Psoas muscle (tissue), 8 donors: ENCODE measurements at regions of chr5 and their contacts with region 1.

Region 1: GRCh38 chr5:156824800-156825199 is 25.3 kb upstream of the PPP1R2B start:
- DNase-seq: no peak
- ATAC-seq: peak in 3 of 4 donors; percentile 51 to 85 (median 69)
- H3K4me3 ChIP-seq: no peak overlapping the region
- H3K27ac ChIP-seq: no peak overlapping the region
- H3K4me1 ChIP-seq: no peaks in the 10 kb centered on the region
- H3K27me3 ChIP-seq: no peaks in the 10 kb centered on the region
- CTCF ChIP-seq: peak; percentile 47

Region 2: DNA sequence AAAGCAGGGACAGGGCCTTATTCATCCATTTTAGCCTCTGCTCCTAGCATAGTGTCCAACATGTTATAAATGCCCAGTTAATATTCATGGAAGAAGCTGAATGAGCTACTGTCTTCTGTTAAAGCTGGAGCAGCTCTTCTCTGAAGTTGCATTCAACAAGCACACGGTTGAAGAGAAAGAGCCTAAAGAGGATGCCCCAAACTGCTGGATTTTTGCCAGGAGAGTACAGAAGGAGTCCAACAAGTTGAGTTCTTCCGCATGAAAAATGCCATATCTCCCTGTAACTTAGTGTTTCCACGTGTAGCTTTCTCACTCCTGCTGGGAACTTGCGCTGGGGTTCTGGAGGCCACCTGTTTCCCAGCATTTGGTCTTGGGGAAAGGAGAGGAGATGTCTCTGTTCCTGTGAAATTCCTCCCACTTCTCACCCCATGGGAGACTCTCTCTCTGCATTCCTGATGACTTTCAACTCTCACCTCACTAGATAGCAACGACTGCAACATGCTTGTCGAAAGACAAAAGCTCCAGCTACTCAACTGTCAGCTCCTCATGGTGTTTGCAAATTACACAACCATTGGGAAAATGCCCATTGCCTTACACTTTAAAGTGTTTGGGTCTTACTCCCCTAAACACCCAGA is 1688.5 kb before region 1 on chr5:
- intact Hi-C with region 1: loop called in 1 of 2 experiments (anchors 10 kb)
- DNase-seq: no peak
- ATAC-seq: no peak
- H3K4me3 ChIP-seq: no peak overlapping the region
- H3K27ac ChIP-seq: no peak overlapping the region
- H3K4me1 ChIP-seq: no peaks in the 10 kb centered on the region
- H3K27me3 ChIP-seq: peaks cover 0 to 7% (median 3%) of the 10 kb centered on the region in 3 donors
- CTCF ChIP-seq: no peak

Region 3: DNA sequence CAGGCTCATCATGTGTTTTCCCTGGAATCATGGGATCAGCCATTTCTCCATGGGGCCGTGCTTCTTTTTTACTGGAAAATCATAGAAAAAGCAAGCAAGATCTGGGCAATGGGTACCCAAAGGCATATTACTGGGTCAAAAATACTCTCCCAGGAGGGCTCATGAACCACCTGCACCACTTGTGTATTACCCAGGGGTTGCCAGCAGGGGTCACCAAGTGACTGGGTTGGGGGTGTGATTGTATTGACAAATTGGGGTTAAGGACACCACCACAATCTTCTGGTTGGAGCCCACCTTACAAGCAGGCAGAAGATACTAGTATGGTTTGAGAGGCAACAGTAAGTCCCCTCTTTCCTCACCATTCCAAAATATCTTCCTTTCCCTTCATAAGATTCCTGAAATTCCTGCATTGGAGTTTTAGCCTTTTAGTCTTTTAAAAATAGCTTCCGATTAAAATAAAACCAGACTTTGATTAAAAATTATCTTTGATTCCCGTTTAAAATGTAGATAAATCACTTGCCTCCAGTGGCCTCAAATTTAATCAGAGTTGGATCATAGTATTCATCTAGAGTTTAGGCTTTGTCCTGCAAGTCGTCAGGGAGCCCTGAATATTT is 1207.9 kb before region 1 on chr5:
- intact Hi-C with region 1: loop called in 1 of 2 experiments (anchors 10 kb)
- DNase-seq: peak; percentile 19 to 54
- ATAC-seq: peak in 2 of 4 donors; percentile 61 to 84
- H3K4me3 ChIP-seq: no peak overlapping the region
- H3K27ac ChIP-seq: no peak overlapping the region
- H3K4me1 ChIP-seq: no peaks in the 10 kb centered on the region
- H3K27me3 ChIP-seq: no peaks in the 10 kb centered on the region
- CTCF ChIP-seq: peak; percentile 76

Region 4: GRCh38 chr5:155700333-155700732 is 1124.5 kb before region 1 on chr5:
- intact Hi-C with region 1: loop called in 1 of 2 experiments (anchors 10 kb)
- DNase-seq: no peak
- ATAC-seq: peak in 2 of 4 donors; percentile 36 to 63
- H3K4me3 ChIP-seq: no peak overlapping the region
- H3K27ac ChIP-seq: no peak overlapping the region
- H3K4me1 ChIP-seq: no peaks in the 10 kb centered on the region
- H3K27me3 ChIP-seq: no peaks in the 10 kb centered on the region
- CTCF ChIP-seq: no peak

Region 5: DNA sequence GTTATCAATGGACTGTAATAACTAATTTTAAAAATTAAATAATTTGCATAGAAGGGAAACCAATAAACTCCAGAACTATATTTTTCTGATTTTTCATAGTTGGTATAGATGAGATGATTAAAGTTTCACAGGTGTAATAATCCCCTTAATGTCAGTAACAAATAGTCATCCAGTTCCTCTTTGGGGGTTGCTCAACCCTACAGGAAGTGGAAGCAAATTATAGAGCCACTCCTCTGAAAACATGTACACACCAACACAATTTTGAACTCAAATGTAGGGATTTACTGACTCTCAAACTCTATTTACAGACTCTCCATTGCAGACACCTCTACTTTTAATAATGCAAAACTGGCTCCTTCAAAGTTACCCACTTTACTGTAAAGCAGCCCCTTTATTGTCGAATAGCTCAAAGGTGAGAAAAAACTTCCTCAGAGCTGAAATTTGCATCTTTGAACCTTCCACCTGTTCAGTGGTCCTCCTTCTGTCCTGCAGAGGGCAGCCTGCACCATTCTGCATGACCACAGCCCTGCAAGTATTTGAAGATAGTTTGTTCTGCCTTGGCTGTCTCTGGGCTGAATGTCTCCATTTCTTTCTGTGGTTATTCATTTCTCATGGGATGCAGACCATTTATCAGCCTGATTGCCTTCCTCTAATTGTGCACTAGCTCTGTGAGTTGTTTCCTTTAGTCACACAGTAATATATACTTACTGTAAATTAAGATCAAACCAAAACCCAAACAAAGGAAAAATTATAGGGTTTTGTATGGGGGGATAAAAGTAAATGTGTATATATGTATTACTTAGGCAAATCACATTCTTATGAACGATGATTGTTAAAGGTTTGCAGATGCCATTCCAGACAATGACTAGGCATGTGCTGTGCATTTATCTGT is 881.0 kb before region 1 on chr5:
- intact Hi-C with region 1: loop called (anchors 5 to 10 kb)
- DNase-seq: peak; percentile 37 to 73
- ATAC-seq: peak; percentile 81 to 98 (median 92)
- H3K4me3 ChIP-seq: no peak overlapping the region
- H3K27ac ChIP-seq: no peak overlapping the region
- H3K4me1 ChIP-seq: no peaks in the 10 kb centered on the region
- H3K27me3 ChIP-seq: no peaks in the 10 kb centered on the region
- CTCF ChIP-seq: peak; percentile 82

Region 6: GRCh38 chr5:156865427-156865826 is 40.6 kb after region 1 on chr5:
- intact Hi-C with region 1: no loop called
- DNase-seq: no peak
- ATAC-seq: no peak
- H3K4me3 ChIP-seq: no peak overlapping the region
- H3K27ac ChIP-seq: no peak overlapping the region
- H3K4me1 ChIP-seq: no peaks in the 10 kb centered on the region
- H3K27me3 ChIP-seq: no peaks in the 10 kb centered on the region
- CTCF ChIP-seq: no peak

Region 7: GRCh38 chr5:157159209-157159751 is 334.5 kb after region 1 on chr5:
- intact Hi-C with region 1: no loop called
- DNase-seq: no peak
- ATAC-seq: no peak
- H3K4me3 ChIP-seq: no peak overlapping the region
- H3K27ac ChIP-seq: no peak overlapping the region
- H3K4me1 ChIP-seq: no peaks in the 10 kb centered on the region
- H3K27me3 ChIP-seq: no peaks in the 10 kb centered on the region
- CTCF ChIP-seq: no peak